Spleen (tissue), 13 donors: ENCODE measurements at regions of chr2 and their contacts with region 1.

Region 1: DNA sequence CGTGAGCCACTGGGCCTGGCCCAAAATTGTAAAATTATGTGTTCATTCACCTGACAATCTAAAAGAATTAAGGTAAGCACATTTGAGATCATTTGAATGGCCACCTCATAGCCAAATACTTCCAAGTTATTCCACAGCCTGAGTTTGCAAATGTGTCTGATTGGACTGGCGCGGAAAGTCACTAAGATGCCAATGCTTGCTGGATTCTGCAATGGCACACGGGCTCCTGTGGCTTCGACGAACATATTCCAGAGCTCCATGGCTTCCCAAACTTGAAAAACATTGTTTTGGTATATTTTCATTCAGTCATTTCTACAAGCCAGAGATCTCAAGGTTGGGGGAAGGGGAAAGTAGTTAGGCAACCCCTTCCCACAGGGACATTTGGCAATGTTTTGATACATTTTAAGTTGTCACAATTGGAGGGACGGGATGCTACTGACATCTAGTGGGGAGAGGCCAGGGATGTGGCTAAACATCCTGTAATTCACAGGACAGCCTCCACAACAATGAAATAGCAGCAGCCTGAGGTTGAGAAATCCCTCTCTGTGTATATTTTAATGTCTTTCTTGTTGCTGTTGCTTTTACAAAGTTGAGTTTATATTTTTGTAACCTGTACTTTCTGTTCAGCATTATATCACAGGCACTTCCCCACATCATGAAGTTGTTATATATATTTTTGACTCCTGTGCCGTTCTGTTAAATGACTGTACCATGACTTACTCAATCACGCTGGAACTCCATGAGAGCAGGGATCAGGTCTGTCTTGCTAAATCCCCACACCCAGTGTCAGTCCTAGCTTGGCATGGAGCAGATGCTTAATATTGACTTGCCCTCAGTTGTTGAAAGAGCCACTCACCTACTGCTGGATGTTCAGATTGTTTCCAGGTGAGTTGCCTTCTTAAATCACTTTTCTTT is 56.9 kb downstream of the COL4A4 start:
- DNase-seq: no peak
- H3K4me3 ChIP-seq: no peak overlapping the region
- H3K27ac ChIP-seq: no peak overlapping the region
- H3K4me1 ChIP-seq: no peaks in the 10 kb centered on the region
- H3K27me3 ChIP-seq: no peaks in the 10 kb centered on the region
- CTCF ChIP-seq: peak in 10 of 11 experiments; percentile 20 to 60 (median 38)
- POLR2A ChIP-seq: no peak

Region 2: GRCh38 chr2:225670111-225670974 is 1436.8 kb before region 1 on chr2:
- intact Hi-C with region 1: loop called (anchors 10 kb)
- DNase-seq: no peak
- H3K4me3 ChIP-seq: no peak overlapping the region
- H3K27ac ChIP-seq: no peak overlapping the region
- H3K4me1 ChIP-seq: no peaks in the 10 kb centered on the region
- H3K27me3 ChIP-seq: no peaks in the 10 kb centered on the region
- CTCF ChIP-seq: peak in 6 of 11 experiments; percentile 17 to 47 (median 36)
- POLR2A ChIP-seq: no peak

Region 3: DNA sequence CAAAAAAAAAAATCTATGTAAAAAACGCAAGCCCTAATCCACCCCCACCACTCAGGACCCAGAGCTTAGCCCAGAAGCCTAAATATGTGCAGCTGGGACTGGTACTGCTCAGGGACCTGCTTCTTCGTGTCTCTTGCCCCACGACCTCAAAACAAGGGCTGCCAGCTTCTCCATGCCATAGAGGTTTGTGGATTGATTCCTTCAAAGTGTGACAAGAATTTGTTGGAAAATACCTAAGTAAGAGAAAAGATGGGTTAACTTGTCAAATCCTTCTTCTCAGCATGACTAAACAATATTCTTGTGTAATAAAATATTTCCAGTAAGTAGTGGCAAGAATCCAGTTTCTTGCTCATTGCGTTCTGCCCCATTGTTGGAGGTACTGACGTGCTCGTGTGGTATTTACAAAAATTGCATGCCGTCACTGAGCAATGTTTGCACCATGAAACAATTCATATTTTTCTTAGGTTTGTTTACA is 281.5 kb after region 1 on chr2:
- intact Hi-C with region 1: no loop called
- DNase-seq: no peak
- H3K4me3 ChIP-seq: no peak overlapping the region
- H3K27ac ChIP-seq: no peak overlapping the region
- H3K4me1 ChIP-seq: peaks cover 0 to 29% (median 7%) of the 10 kb centered on the region in 6 donors
- H3K27me3 ChIP-seq: no peaks in the 10 kb centered on the region
- CTCF ChIP-seq: no peak
- POLR2A ChIP-seq: no peak